ENCODE measurements at regions of chr5 and their contacts with region 1.

Region 1: GRCh38 chr5:139795074-139796001 is at the start of gene PSD2:
- DNase-seq: peak; percentile 48 to 64 (median 58)
- H3K4me3 ChIP-seq: peak within 1 kb of the TSS; percentile 11
- H3K27ac ChIP-seq: no peak within 1 kb of the TSS
- H3K4me1 ChIP-seq: no peaks in the 10 kb centered on the region
- H3K27me3 ChIP-seq: no peaks in the 10 kb centered on the region
- CTCF ChIP-seq: no peak
- EP300 ChIP-seq: no peak
- POLR2A ChIP-seq: no peak
- total RNA-seq, gene PSD2: 0.05 to 0.37 (median 0.13) TPM in 5 of 7 donors, not detected in the others

Region 2: GRCh38 chr5:139251281-139251687 is 544.1 kb before region 1 on chr5:
- intact Hi-C with region 1: no loop called
- DNase-seq: no peak
- H3K4me3 ChIP-seq: no peak overlapping the region
- H3K27ac ChIP-seq: no peak overlapping the region
- H3K4me1 ChIP-seq: no peaks in the 10 kb centered on the region
- H3K27me3 ChIP-seq: no peaks in the 10 kb centered on the region
- CTCF ChIP-seq: no peak
- EP300 ChIP-seq: no peak
- POLR2A ChIP-seq: no peak

Region 3: DNA sequence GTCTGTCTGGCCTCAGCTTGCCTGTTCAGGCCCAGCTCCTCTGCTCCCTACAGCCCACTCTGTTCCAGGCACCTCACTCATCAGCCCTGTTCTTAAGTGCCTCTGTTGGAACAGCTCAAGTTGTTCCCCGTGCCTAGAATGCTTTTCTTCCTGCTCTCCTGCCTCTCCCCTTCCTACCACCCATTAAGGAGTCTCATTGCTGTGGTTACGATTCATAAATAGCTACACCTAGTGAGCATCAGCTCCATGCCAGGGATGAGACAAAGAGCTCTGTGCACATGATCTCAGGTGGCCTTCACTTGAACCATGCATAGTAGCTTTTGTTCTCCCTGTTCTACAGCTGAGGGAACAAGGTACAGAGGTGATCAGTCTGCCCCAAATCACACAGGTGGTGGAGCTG is 54.6 kb after region 1 on chr5:
- intact Hi-C with region 1: loop called in 3 of 4 experiments (anchors 5 to 10 kb)
- DNase-seq: no peak
- H3K4me3 ChIP-seq: no peak overlapping the region
- H3K27ac ChIP-seq: peak overlapping the region; percentile 1 to 87
- H3K4me1 ChIP-seq: peaks cover 5% of the 10 kb centered on the region
- H3K27me3 ChIP-seq: no peaks in the 10 kb centered on the region
- CTCF ChIP-seq: no peak
- EP300 ChIP-seq: no peak
- POLR2A ChIP-seq: no peak

Measured in ovary (tissue), 10 donors.